CD4-positive, alpha-beta memory T cell (primary cell): ENCODE measurements at regions of chr19 and their contacts with region 1.

Region 1: DNA sequence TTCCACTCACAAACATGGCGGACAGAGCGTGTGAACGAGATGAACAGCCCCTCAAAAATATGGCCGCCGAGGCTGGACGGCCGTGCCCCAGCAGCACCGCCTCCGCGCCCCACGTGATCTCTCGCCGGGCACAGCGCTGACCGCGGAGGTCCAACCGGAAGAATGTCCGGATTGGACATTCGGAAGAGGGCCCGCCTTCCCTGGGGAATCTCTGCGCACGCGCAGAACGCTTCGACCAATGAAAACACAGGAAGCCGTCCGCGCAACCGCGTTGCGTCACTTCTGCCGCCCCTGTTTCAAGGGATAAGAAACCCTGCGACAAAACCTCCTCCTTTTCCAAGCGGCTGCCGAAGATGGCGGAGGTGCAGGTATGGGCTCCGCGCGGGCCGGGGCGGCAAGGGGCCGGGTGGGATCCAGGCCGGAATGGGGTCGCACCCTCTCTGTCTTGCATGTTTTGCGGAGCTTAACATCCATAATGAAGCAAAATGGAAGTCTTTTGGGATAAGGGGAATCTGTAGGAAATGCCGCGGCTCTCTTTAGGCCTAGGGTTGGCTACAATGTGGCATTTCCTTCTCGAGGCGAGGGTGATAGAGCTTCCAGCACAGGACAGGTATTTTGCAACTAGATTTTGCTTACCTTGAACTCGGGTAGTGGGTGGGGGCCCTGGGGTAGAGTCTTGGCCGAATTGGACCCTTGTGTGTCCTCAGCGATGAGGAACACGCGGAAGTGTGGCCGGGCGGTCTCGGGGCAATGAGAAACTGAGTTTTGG is at the start of gene RPL13A:
- DNase-seq: peak; percentile 98 to 100 (median 100)
- H3K4me3 ChIP-seq: peak within 1 kb of the TSS; percentile 98 to 99
- H3K4me3 Mint-ChIP-seq: peak within 1 kb of the TSS; percentile 94 to 100 (median 98)
- H3K27ac ChIP-seq: peak within 1 kb of the TSS; percentile 85
- H3K27ac Mint-ChIP-seq: peak within 1 kb of the TSS; percentile 95 to 98 (median 98)
- H3K4me1 ChIP-seq: peaks cover 39% of the 10 kb centered on the region
- H3K4me1 Mint-ChIP-seq: peaks cover 18 to 55% (median 36%) of the 10 kb centered on the region in 4 donors
- H3K27me3 ChIP-seq: no peaks in the 10 kb centered on the region
- H3K27me3 Mint-ChIP-seq: no peaks in the 10 kb centered on the region
- total RNA-seq, gene RPL13A: 5,517 to 5,661 TPM

Region 2: GRCh38 chr19:49287141-49287770 is 200.2 kb before region 1 on chr19:
- CTCF ChIA-PET with region 1: no interaction called
- POLR2A ChIA-PET with region 1: no interaction called
- intact Hi-C with region 1: no loop called
- DNase-seq: no peak
- H3K4me3 ChIP-seq: no peak overlapping the region
- H3K4me3 Mint-ChIP-seq: no peak overlapping the region
- H3K27ac ChIP-seq: no peak overlapping the region
- H3K27ac Mint-ChIP-seq: no peak overlapping the region
- H3K4me1 ChIP-seq: no peaks in the 10 kb centered on the region
- H3K4me1 Mint-ChIP-seq: no peaks in the 10 kb centered on the region
- H3K27me3 ChIP-seq: no peaks in the 10 kb centered on the region
- H3K27me3 Mint-ChIP-seq: peaks cover 0 to 4% of the 10 kb centered on the region in 2 donors

Region 3: GRCh38 chr19:49580264-49581006 is 93.0 kb after region 1 on chr19 and contains the start of gene NOSIP:
- CTCF ChIA-PET with region 1: no interaction called
- POLR2A ChIA-PET with region 1: interaction called, 12 read pairs
- intact Hi-C with region 1: no loop called
- DNase-seq: peak; percentile 94 to 97 (median 95)
- H3K4me3 ChIP-seq: peak within 1 kb of the TSS; percentile 54 to 99
- H3K4me3 Mint-ChIP-seq: peak within 1 kb of the TSS; percentile 90 to 97 (median 94)
- H3K27ac ChIP-seq: peak within 1 kb of the TSS; percentile 80
- H3K27ac Mint-ChIP-seq: peak within 1 kb of the TSS; percentile 85 to 96 (median 94)
- H3K4me1 ChIP-seq: peaks cover 31% of the 10 kb centered on the region
- H3K4me1 Mint-ChIP-seq: peaks cover 21 to 40% (median 28%) of the 10 kb centered on the region in 4 donors
- H3K27me3 ChIP-seq: no peaks in the 10 kb centered on the region
- H3K27me3 Mint-ChIP-seq: no peaks in the 10 kb centered on the region
- total RNA-seq, gene NOSIP: 177 to 191 TPM

Region 4: DNA sequence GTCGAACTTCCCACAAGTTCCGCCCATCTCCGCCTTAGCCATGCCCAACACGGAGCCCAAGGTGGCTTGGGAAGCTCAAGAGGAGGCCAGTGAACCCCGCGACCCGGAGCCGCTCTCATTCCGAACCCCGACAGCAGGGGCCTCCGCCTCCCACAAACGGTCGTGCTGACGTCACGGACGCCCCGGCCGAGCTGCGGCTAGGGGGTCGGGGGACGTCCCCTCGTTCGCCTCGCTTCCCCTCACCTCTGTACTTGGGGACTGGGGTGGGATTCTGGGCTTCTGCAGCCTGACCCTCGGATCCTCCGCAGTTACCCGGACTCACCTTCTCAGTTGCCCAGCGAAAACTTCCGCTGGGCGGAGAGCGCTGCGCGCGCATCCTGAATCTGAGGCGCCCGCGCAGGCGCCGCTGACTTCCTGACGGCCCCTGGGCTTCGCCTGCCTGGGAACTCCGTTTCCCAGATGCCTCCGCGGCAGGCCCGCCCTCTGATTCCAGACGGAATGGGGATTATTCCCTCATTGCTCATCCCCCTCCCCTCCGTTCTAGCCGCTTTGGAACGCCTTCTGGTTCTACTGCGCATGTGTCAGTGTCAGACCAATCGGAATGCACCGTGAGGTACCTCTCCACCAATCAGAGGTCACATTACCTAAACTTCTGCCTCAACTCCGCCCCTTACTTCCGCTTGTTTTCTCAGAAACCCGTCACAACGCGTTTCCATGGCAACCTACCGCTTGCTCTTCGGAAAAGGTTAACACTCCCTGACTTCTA is 537.7 kb after region 1 on chr19 and contains the start of gene VRK3:
- CTCF ChIA-PET with region 1: no interaction called
- POLR2A ChIA-PET with region 1: no interaction called
- intact Hi-C with region 1: no loop called
- DNase-seq: peak; percentile 98 to 100 (median 100)
- H3K4me3 ChIP-seq: peak within 1 kb of the TSS; percentile 53 to 98
- H3K4me3 Mint-ChIP-seq: peak within 1 kb of the TSS; percentile 96 to 99 (median 97)
- H3K27ac ChIP-seq: peak within 1 kb of the TSS; percentile 96
- H3K27ac Mint-ChIP-seq: peak within 1 kb of the TSS; percentile 98 to 100 (median 100)
- H3K4me1 ChIP-seq: peaks cover 33% of the 10 kb centered on the region
- H3K4me1 Mint-ChIP-seq: peaks cover 23 to 63% (median 41%) of the 10 kb centered on the region in 4 donors
- H3K27me3 ChIP-seq: no peaks in the 10 kb centered on the region
- H3K27me3 Mint-ChIP-seq: no peaks in the 10 kb centered on the region
- total RNA-seq, gene VRK3: 109 to 114 TPM